Transverse colon (tissue), 4 donors: ENCODE measurements at regions of chr2 and their contacts with region 1.

Region 1: GRCh38 chr2:70070541-70071268 is 16.6 kb upstream of the PCBP1 start:
- DNase-seq: peak; percentile 71
- H3K4me3 ChIP-seq: no peak overlapping the region
- H3K27ac ChIP-seq: peak overlapping the region; percentile 73 to 88 (median 84)
- H3K4me1 ChIP-seq: peaks cover 0 to 39% (median 23%) of the 10 kb centered on the region in 4 donors
- H3K27me3 ChIP-seq: no peaks in the 10 kb centered on the region
- CTCF ChIP-seq: peak; percentile 76 to 97 (median 81)
- EP300 ChIP-seq: no peak
- POLR2A ChIP-seq: no peak

Region 2: DNA sequence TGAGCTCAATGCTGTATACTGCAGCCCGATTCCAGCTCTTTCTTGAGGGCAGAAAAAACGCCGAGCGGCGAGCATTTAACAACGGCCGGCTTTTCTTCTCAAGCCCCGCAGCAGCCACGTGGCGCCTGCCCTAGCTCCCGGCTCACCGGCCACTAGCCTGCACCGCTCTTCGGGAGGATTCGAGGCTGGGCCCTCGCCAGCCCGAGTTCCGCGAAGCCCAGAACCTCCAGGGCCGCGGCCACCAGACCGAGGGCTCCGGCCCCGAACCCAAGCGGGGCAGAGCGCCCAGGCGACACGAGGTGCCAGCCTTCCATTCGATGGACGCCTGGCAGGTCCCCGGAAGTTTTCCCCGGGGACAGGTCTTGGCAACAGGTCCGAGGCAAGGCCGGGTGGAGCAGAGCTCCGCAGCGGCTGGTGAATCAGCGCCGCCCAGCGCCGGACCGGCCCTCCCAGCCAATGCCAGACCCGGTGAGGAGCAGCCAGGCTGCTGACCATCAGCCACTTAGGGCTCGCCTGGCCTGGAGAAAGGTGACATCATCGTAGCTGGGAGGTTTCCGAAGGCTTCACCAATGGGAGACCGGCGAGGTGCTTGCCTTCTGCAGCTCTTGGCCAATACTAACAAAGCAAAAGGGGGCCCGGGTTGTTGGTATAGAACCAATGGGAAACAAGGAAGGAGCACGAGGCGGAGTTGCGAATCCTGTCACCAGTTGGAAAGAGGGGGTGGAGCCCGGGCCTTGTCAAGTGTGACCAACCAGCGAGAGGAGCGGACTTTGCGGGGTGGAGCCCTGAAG is 156.3 kb before region 1 on chr2:
- in situ Hi-C with region 1: loop called in 2 of 4 experiments (anchors 10 to 25 kb)
- intact Hi-C with region 1: loop called (anchors 10 kb)
- DNase-seq: peak; percentile 100
- H3K4me3 ChIP-seq: peak overlapping the region; percentile 38 to 92 (median 82)
- H3K27ac ChIP-seq: peak overlapping the region; percentile 94 to 99 (median 98)
- H3K4me1 ChIP-seq: peaks cover 13 to 49% (median 21%) of the 10 kb centered on the region in 4 donors
- H3K27me3 ChIP-seq: no peaks in the 10 kb centered on the region
- CTCF ChIP-seq: peak in 3 of 5 experiments; percentile 15 to 46 (median 17)
- EP300 ChIP-seq: no peak
- POLR2A ChIP-seq: peak; percentile 71

Region 3: DNA sequence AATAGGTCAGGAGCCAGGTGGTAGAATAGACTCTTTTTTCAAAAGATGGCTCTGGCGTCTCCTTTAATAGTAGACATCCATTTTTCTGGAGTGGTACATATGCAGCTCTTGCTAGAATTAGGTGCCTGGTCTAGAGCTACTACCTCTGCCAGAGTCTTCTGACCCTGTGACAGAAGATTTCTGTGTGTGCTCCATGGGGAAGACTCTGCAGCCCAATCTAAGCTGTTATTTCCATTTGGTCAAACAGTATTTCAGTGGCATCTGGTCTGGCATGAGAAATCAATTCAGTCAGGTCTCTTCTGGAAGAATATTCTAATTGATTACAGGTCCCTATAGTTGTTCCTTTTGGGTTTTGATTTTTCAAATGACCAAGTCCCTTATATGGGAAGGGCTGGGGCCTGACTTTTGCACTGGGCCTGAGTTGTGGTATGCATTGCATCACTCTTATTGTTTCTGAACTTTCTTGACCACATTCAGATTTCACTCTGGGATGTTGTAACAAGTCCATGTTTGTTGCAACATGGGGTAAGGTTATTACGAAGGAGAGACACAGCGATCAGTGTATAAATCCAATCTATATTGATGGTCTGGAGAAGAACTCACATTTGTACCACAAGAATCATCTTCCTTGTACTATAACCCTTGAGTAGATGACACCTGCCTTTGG is 143.7 kb before region 1 on chr2:
- in situ Hi-C with region 1: loop called in 3 of 4 experiments (anchors 10 to 25 kb)
- intact Hi-C with region 1: no loop called
- DNase-seq: no peak
- H3K4me3 ChIP-seq: no peak overlapping the region
- H3K27ac ChIP-seq: no peak overlapping the region
- H3K4me1 ChIP-seq: peaks cover 0 to 3% (median 0%) of the 10 kb centered on the region in 4 donors
- H3K27me3 ChIP-seq: no peaks in the 10 kb centered on the region
- CTCF ChIP-seq: no peak
- EP300 ChIP-seq: no peak
- POLR2A ChIP-seq: no peak

Region 4: DNA sequence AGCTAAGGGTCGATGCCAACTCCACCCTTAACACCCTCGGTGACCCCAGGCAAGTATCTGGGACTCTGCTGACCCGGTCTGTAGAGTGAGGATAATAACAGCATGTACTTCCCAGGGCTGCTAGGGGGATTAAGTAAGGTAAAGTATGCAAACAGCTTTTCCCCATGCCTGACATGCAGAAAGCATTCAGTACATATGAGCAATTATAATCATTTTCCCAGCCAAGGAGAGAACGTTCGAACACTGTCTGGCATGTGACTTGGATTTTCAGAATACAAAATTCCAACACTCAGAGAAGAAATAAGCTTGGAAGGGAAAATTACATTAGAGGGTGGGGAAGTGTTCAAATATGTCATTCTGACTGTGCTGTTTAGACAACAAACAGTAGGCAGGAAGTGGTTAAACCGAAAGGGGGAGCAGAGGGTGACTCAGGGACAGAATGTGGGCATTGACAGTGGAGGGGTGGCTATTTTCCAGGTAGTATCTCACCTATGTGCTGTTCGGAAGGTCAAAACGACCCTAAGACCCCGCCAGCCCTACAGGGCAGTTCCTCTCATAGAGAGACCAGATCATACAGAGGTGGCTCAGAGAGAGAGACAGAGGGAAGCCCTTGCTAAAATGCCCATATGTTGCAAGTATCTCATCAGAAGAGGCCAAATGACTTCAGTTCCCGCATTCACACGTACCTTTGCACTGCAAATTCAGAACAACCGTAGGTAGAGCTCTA is 124.2 kb before region 1 on chr2:
- in situ Hi-C with region 1: loop called in 1 of 4 experiments (anchors 25 kb)
- intact Hi-C with region 1: no loop called
- DNase-seq: no peak
- H3K4me3 ChIP-seq: no peak overlapping the region
- H3K27ac ChIP-seq: peak overlapping the region in 1 of 4 donors; percentile 15
- H3K4me1 ChIP-seq: peaks cover 0 to 6% (median 2%) of the 10 kb centered on the region in 4 donors
- H3K27me3 ChIP-seq: peaks cover 13% of the 10 kb centered on the region
- CTCF ChIP-seq: no peak
- EP300 ChIP-seq: no peak
- POLR2A ChIP-seq: no peak